H1 (cell line): ENCODE measurements at regions of chr15 and their contacts with region 1.

Region 1: GRCh38 chr15:77052556-77052955 is 18.4 kb downstream of the TSPAN3 start:
- DNase-seq: no peak
- H3K4me3 ChIP-seq: no peak overlapping the region
- H3K27ac ChIP-seq: no peak overlapping the region
- H3K4me1 ChIP-seq: peaks cover 0 to 5% (median 2%) of the 10 kb centered on the region in 4 experiments; a peak in 3 of 7 replicates
- H3K27me3 ChIP-seq: no peaks in the 10 kb centered on the region
- CTCF ChIP-seq: no peak
- EP300 ChIP-seq: no peak
- POLR2A ChIP-seq: no peak
- RAD21 ChIP-seq: no peak

Region 2: DNA sequence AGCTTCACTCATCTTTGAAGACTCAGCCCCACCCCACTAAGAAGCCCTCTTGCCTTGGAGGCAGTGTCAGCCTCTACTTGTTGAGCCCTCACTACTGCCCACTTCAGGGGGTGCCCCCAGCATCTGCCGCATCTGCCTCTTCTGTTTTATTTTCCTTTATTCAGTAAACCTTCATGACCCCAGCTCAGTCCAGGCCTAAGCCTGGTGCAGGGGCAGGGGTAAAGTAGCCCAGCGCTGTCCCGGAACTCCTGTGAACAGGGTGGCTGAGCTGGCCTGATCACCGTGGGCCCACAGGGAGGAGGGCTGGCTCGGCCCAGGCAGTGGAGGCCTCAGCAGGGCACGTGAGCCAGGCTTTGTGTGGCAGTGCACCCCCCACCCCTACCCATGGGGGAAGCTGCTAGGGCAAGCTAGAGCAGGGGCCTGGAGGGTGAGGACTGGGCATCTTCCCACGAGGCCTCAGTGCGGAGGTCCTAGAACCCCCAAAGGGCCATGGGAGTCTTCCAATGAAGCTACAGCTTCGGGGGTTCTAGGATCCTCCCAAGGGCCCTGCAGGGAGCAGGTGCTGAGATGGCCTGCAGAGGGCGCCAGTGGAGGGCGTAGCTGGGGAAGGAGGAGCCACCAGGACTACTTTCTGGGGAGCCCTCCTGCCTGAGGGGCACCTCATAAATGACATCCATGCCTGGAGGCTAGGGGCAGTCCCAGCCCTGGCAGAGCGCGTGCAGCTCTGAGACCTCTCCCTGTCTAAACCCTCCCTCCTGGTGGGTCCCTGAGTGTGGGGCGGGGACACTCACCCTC is 17.7 kb before region 1 on chr15:
- CTCF ChIA-PET with region 1: interaction called, 27 read pairs
- POLR2A ChIA-PET with region 1: no interaction called
- DNase-seq: peak in 1 of 2 experiments; percentile 91
- H3K4me3 ChIP-seq: no peak overlapping the region
- H3K27ac ChIP-seq: no peak overlapping the region
- H3K4me1 ChIP-seq: peaks cover 0 to 21% (median 13%) of the 10 kb centered on the region in 4 experiments; a peak in 5 of 7 replicates
- H3K27me3 ChIP-seq: no peaks in the 10 kb centered on the region; a peak in 1 of 7 replicates
- CTCF ChIP-seq: peak in 2 of 3 experiments; percentile 81 to 84; a peak in 3 of 4 replicates
- EP300 ChIP-seq: no peak
- POLR2A ChIP-seq: no peak
- RAD21 ChIP-seq: peak; percentile 52 to 67